ENCODE measurements at regions of chr10 and their contacts with region 1.

Region 1: DNA sequence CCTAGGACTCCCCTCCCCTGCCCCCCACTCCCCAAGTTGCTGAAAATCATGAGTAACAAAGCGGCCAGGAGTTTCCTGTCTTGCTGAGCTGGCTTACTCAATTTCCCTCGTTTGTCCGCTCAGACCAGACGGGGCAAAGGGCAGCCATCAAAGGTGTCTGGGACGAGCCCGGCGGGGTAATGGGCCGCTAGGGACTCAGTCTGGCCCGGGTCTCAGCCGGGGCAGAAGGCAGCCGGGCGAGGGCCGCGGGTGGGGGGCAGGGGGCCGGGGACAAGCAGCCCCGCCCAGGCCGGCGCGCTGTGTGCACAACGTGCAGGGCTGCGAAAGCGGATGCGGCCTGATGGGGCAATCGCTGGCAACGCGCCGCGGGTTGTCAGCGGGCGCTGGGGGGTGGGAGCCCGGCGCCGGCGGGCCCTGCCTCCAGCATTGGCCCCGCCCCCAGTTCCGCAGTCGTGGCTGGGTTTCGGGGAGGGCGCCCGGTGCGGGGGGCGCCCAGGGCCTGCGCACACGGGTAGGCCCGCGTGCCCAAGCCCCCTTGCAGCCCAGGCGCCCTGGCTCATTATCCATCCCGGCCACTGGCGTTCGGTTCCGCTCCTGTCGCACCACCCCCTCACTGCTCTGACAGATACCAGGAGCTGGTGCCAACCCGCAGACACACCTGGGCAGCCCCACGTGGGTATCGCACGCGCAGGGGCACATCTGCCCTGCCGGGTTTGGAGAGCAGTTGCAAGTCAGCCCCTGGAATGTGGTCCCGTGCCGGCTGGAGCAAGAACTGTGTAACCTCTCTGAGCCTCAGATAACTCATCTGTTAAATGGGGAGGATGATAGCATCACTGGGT is 35.1 kb downstream of the DNAJB12 start:
- DNase-seq: peak; percentile 73 to 94
- ATAC-seq: peak; percentile 54 to 66
- H3K4me3 ChIP-seq: peak overlapping the region; percentile 27
- H3K27ac ChIP-seq: peak overlapping the region; percentile 98 to 99
- H3K4me1 ChIP-seq: peaks cover 92% of the 10 kb centered on the region
- CTCF ChIP-seq: no peak
- EP300 ChIP-seq: peak; percentile 93 to 98; a peak in 4 of 5 replicates
- POLR2A ChIP-seq: no peak
- RAD21 ChIP-seq: peak in 1 of 2 experiments; percentile 58; a peak in 3 of 5 replicates

Region 2: GRCh38 chr10:72260588-72261322 is 58.9 kb before region 1 on chr10:
- CTCF ChIA-PET with region 1: interaction called, 9 read pairs
- POLR2A ChIA-PET with region 1: interaction called, 19 read pairs
- DNase-seq: peak; percentile 91 to 99
- ATAC-seq: peak; percentile 90 to 91
- H3K4me3 ChIP-seq: peak overlapping the region; percentile 41
- H3K27ac ChIP-seq: peak overlapping the region; percentile 99 to 100
- H3K4me1 ChIP-seq: peaks cover 83% of the 10 kb centered on the region
- CTCF ChIP-seq: no peak
- EP300 ChIP-seq: peak; percentile 95 to 97; a peak in 4 of 5 replicates
- POLR2A ChIP-seq: peak; percentile 32
- RAD21 ChIP-seq: peak; percentile 42 to 61

Region 3: GRCh38 chr10:72278668-72279393 is 40.8 kb before region 1 on chr10:
- CTCF ChIA-PET with region 1: interaction called, 94 read pairs
- POLR2A ChIA-PET with region 1: interaction called, 197 read pairs
- DNase-seq: peak in 1 of 2 experiments; percentile 52
- ATAC-seq: no peak
- H3K4me3 ChIP-seq: no peak overlapping the region
- H3K27ac ChIP-seq: peak overlapping the region; percentile 98
- H3K4me1 ChIP-seq: peaks cover 39% of the 10 kb centered on the region
- CTCF ChIP-seq: peak; percentile 26; the same call in 1 of the 3 replicates
- EP300 ChIP-seq: no peak
- POLR2A ChIP-seq: no peak
- RAD21 ChIP-seq: no peak

Region 4: DNA sequence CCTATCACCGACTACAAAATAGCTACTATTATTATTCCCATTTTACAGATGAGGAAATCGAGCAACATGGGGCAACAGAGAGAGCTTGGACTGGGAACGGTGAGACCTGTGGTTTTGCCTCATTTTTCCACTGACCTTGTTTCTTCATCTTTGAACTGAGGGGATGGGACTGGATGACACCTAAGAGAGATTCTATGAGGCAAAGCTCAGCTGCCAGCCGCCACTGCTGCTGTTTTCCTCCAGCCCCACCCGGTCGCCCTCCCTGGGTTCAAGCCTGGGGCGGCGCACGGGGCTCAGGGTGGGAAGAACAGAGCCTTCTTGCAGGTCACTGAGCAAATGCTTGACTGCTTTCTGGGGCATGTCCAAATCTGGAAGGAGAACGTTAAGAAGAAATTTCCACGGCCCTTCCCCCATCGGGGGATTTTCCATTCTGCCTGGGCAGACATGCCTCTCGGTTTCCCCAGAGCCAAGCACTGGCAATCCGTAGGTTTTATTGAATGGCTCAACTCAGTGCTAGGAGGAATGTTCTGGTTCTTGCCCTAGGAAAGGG is 33.6 kb before region 1 on chr10:
- CTCF ChIA-PET with region 1: no interaction called
- POLR2A ChIA-PET with region 1: interaction called, 28 read pairs
- DNase-seq: peak in 1 of 2 experiments; percentile 74
- ATAC-seq: peak; percentile 59 to 67
- H3K4me3 ChIP-seq: no peak overlapping the region
- H3K27ac ChIP-seq: peak overlapping the region; percentile 75 to 82
- H3K4me1 ChIP-seq: peaks cover 25% of the 10 kb centered on the region
- CTCF ChIP-seq: no peak
- EP300 ChIP-seq: no peak
- POLR2A ChIP-seq: no peak
- RAD21 ChIP-seq: 0 out of 5 replicates have a peak, but pooled peaks of 1 of the 2 experiments have one; percentile 6

Region 5: GRCh38 chr10:72292223-72292691 is 27.4 kb before region 1 on chr10:
- CTCF ChIA-PET with region 1: interaction called, 4 read pairs
- POLR2A ChIA-PET with region 1: interaction called, 101 read pairs
- DNase-seq: peak in 1 of 2 experiments; percentile 76
- ATAC-seq: peak; percentile 31 to 74
- H3K4me3 ChIP-seq: no peak overlapping the region
- H3K27ac ChIP-seq: peak overlapping the region; percentile 98 to 100
- H3K4me1 ChIP-seq: peaks cover 55% of the 10 kb centered on the region
- CTCF ChIP-seq: no peak
- EP300 ChIP-seq: peak in 1 of 2 experiments; percentile 33; a peak in 2 of 5 replicates
- POLR2A ChIP-seq: no peak
- RAD21 ChIP-seq: no peak

Region 6: GRCh38 chr10:72297968-72298773 is 21.5 kb before region 1 on chr10:
- CTCF ChIA-PET with region 1: interaction called, 7 read pairs
- POLR2A ChIA-PET with region 1: interaction called, 101 read pairs
- DNase-seq: peak; percentile 89 to 99
- ATAC-seq: peak; percentile 91 to 93
- H3K4me3 ChIP-seq: peak overlapping the region; percentile 55
- H3K27ac ChIP-seq: peak overlapping the region; percentile 98 to 100
- H3K4me1 ChIP-seq: peaks cover 41% of the 10 kb centered on the region
- CTCF ChIP-seq: no peak
- EP300 ChIP-seq: no peak
- POLR2A ChIP-seq: peak; percentile 36
- RAD21 ChIP-seq: peak in 1 of 2 experiments; percentile 21; a peak in 1 of 5 replicates

Region 7: DNA sequence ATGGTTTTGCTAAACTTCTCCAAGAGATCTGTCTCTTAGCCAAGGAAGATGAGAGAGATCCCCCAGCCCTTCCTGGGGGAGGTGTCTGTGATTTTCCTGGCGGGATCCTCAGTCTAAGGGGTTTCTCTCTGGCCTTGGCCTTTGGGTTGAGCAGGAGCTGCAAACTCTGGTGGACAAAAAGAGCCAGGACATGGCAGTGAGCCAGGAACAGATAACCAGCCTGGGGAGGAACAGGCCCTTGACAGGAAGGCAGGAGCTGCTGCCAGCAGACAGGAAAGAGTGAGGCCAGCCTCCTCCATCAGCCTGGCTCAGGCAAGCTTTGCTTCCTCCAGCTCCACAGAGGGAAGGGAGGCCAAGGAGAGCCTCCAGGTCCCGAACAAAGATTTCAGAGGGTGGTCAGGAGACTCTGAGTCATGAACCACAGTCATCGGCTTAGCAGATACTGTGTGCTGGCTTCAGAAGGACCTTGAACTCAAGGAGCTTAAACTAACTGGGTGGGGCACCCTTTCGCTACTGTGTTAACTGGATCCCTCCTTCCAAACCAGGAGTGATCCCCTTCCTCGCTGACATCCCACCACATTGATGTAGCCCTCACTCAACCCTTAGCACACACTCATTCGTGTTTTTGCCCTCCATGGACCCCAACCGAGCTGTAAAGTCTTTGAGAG is 11.2 kb before region 1 on chr10:
- CTCF ChIA-PET with region 1: interaction called, 10 read pairs
- POLR2A ChIA-PET with region 1: interaction called, 19 read pairs
- DNase-seq: peak in 1 of 2 experiments; percentile 89
- ATAC-seq: peak; percentile 86
- H3K4me3 ChIP-seq: 0 out of 3 replicates have a peak overlapping the region, but pooled peaks have one; percentile 11
- H3K27ac ChIP-seq: peak overlapping the region; percentile 90 to 98
- H3K4me1 ChIP-seq: peaks cover 59% of the 10 kb centered on the region
- CTCF ChIP-seq: no peak
- EP300 ChIP-seq: peak in 1 of 2 experiments; percentile 33; a peak in 1 of 5 replicates
- POLR2A ChIP-seq: no peak
- RAD21 ChIP-seq: no peak